CD8-positive, alpha-beta T cell (primary cell): ENCODE measurements at regions of chr17 and their contacts with region 1.

Region 1: GRCh38 chr17:6059406-6059805 is 10.8 kb upstream of the WSCD1 start:
- DNase-seq: no peak
- ATAC-seq: no peak
- H3K4me3 ChIP-seq: no peak overlapping the region
- H3K4me3 Mint-ChIP-seq: no peak overlapping the region
- H3K27ac ChIP-seq: no peak overlapping the region
- H3K27ac Mint-ChIP-seq: no peak overlapping the region
- H3K4me1 ChIP-seq: no peaks in the 10 kb centered on the region
- H3K4me1 Mint-ChIP-seq: no peaks in the 10 kb centered on the region
- H3K27me3 ChIP-seq: no peaks in the 10 kb centered on the region
- H3K27me3 Mint-ChIP-seq: peaks cover 47% of the 10 kb centered on the region
- CTCF ChIP-seq: no peak

Region 2: GRCh38 chr17:5600041-5600440 is 459.4 kb before region 1 on chr17:
- CTCF ChIA-PET with region 1: no interaction called
- POLR2A ChIA-PET with region 1: no interaction called
- intact Hi-C with region 1: loop called in 1 of 2 experiments (anchors 5 kb)
- DNase-seq: no peak
- ATAC-seq: no peak
- H3K4me3 ChIP-seq: no peak overlapping the region
- H3K4me3 Mint-ChIP-seq: no peak overlapping the region
- H3K27ac ChIP-seq: no peak overlapping the region
- H3K27ac Mint-ChIP-seq: no peak overlapping the region
- H3K4me1 ChIP-seq: no peaks in the 10 kb centered on the region
- H3K4me1 Mint-ChIP-seq: no peaks in the 10 kb centered on the region
- H3K27me3 ChIP-seq: peaks cover 0 to under 1% of the 10 kb centered on the region in 2 experiments
- H3K27me3 Mint-ChIP-seq: peaks cover 45% of the 10 kb centered on the region
- CTCF ChIP-seq: no peak

Region 3: GRCh38 chr17:6187836-6188235 is 128.4 kb after region 1 on chr17:
- CTCF ChIA-PET with region 1: no interaction called
- POLR2A ChIA-PET with region 1: no interaction called
- intact Hi-C with region 1: no loop called
- DNase-seq: no peak
- ATAC-seq: no peak
- H3K4me3 ChIP-seq: no peak overlapping the region
- H3K4me3 Mint-ChIP-seq: no peak overlapping the region
- H3K27ac ChIP-seq: no peak overlapping the region
- H3K27ac Mint-ChIP-seq: no peak overlapping the region
- H3K4me1 ChIP-seq: no peaks in the 10 kb centered on the region
- H3K4me1 Mint-ChIP-seq: no peaks in the 10 kb centered on the region
- H3K27me3 ChIP-seq: no peaks in the 10 kb centered on the region
- H3K27me3 Mint-ChIP-seq: peaks cover 16% of the 10 kb centered on the region
- CTCF ChIP-seq: no peak